Activated CD4-positive, alpha-beta T cell treated with anti-CD3 and anti-CD28 coated beads for 36 hours (primary cell): ENCODE measurements at regions of chr1 and their contacts with region 1.

Region 1: GRCh38 chr1:235855811-235856429 is 10.8 kb downstream of the LYST start:
- DNase-seq: no peak
- ATAC-seq: peak; percentile 62
- H3K4me3 Mint-ChIP-seq: no peak overlapping the region
- H3K27ac Mint-ChIP-seq: peak overlapping the region; percentile 84
- H3K4me1 Mint-ChIP-seq: peaks cover 54% of the 10 kb centered on the region
- H3K27me3 Mint-ChIP-seq: no peaks in the 10 kb centered on the region

Region 2: GRCh38 chr1:235128456-235129328 is 727.2 kb before region 1 on chr1 and contains the start of gene TOMM20:
- CTCF ChIA-PET with region 1: no interaction called
- POLR2A ChIA-PET with region 1: no interaction called
- intact Hi-C with region 1: loop called in 1 of 2 experiments (anchors 5 kb)
- DNase-seq: peak; percentile 97
- ATAC-seq: peak; percentile 92
- H3K4me3 Mint-ChIP-seq: peak within 1 kb of the TSS; percentile 90
- H3K27ac Mint-ChIP-seq: peak within 1 kb of the TSS; percentile 98
- H3K4me1 Mint-ChIP-seq: peaks cover 41% of the 10 kb centered on the region
- H3K27me3 Mint-ChIP-seq: no peaks in the 10 kb centered on the region
- total RNA-seq, gene TOMM20: 62.1 to 148 TPM

Region 3: DNA sequence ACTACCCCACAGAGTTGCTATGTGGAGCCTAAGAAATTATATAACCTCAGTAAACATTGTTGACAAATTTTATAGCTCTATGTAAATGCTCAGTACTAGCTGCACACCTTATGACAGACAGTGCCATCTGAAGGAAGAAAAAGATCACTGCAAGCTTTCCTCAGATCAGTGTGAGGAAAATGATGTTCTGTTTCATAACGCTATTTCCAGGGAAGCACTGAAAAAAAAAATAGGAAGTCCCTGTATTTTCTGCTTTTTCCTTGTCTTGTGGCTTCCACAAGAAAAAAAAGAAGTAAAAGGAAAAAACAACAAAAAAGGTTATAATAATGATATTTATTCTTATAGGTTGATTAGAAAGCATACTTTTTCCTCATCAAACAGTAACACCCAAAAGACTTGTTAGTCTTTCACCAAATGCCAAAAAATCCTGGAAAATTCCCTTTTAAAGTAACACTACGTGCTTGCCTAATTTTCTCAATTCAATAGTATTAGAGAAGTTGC is 12.4 kb before region 1 on chr1:
- CTCF ChIA-PET with region 1: interaction called, 18 read pairs
- POLR2A ChIA-PET with region 1: interaction called, 6 read pairs
- intact Hi-C with region 1: no loop called
- DNase-seq: no peak
- ATAC-seq: peak; percentile 73
- H3K4me3 Mint-ChIP-seq: no peak overlapping the region
- H3K27ac Mint-ChIP-seq: no peak overlapping the region
- H3K4me1 Mint-ChIP-seq: peaks cover 45% of the 10 kb centered on the region
- H3K27me3 Mint-ChIP-seq: no peaks in the 10 kb centered on the region

Region 4: DNA sequence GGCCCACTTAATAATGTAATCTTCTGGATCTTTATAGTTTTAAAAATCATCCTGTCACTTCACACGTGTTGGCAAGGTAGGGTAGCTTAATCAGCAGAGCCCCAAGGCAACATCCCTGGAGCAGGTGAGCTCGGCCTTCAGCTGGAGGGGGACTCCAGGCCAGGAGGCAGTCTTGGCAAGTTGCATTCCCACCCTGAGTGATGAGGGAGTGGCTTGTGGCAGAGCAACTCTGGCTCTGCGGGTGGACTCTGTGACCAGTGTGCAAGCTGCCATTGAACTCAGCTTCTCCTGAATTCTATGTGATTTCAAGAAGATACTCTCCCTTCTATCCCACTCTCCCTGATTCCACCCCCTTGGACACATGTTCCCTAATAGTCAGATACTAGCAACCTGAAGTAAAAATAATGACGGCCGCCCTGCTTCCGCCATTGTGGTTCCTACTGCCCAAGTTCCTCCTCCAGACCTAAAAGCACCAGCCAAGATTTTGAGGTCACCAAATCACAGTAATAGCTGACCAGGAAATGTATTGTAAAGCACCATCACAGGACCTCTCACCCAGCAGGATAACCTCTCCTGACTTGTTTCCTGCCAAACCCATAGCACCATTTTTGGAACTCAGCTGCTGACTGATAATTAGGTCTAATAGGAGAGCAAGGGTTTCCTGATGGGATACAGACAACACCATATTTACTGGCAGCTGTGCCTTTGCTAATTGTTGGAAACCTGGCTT is 22.3 kb after region 1 on chr1:
- CTCF ChIA-PET with region 1: interaction called, 17 read pairs
- POLR2A ChIA-PET with region 1: interaction called, 3 read pairs
- intact Hi-C with region 1: loop called (anchors 2 kb)
- DNase-seq: no peak
- ATAC-seq: no peak
- H3K4me3 Mint-ChIP-seq: no peak overlapping the region
- H3K27ac Mint-ChIP-seq: no peak overlapping the region
- H3K4me1 Mint-ChIP-seq: peaks cover 68% of the 10 kb centered on the region
- H3K27me3 Mint-ChIP-seq: no peaks in the 10 kb centered on the region

Region 5: DNA sequence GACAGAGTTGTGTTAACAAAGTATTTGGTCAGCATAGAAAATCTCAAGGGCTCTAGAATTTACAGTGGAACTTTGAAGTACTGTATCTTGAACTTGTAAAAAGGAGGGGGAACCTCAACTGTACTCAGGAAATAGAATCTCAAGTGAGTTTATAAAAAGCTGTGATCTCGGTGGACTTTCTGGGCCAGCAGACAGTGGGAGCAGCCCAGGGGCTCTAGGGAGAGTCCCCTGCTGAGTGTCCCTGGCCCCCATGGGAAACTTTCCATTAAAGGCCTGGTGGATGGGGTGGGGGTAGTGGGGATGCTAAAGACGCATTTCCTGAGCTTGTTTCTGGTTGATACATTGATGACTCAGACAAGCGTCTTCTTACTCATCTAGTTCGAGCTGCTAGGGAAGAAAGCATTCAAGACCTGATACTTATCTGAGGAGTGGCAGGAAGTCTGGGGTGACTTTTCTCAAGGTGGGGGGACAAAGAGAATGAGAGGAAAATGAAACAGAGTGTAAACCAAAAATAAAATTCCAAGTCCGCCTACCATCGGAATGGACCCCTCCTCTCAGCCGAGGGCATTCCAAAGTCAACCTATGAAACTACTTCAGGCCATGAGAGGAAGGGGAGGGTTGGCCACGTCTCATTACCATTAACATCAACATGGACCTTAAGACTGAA is 143.5 kb after region 1 on chr1:
- CTCF ChIA-PET with region 1: interaction called, 3 read pairs
- POLR2A ChIA-PET with region 1: interaction called, 13 read pairs
- intact Hi-C with region 1: loop called in 1 of 2 experiments (anchors 2 kb)
- DNase-seq: peak; percentile 76
- ATAC-seq: peak; percentile 85
- H3K4me3 Mint-ChIP-seq: peak overlapping the region; percentile 32
- H3K27ac Mint-ChIP-seq: peak overlapping the region; percentile 94
- H3K4me1 Mint-ChIP-seq: peaks cover 58% of the 10 kb centered on the region
- H3K27me3 Mint-ChIP-seq: no peaks in the 10 kb centered on the region